HepG2 (cell line): ENCODE measurements at regions of chr6 and their contacts with region 1.

Region 1: GRCh38 chr6:104940881-104941728 is 15.8 kb upstream of the LIN28B start:
- DNase-seq: peak; percentile 43
- ATAC-seq: peak; percentile 87
- H3K4me3 ChIP-seq: peak overlapping the region; percentile 74 to 92 (median 76)
- H3K27ac ChIP-seq: peak overlapping the region; percentile 88
- H3K4me1 ChIP-seq: peaks cover 12% of the 10 kb centered on the region
- H3K27me3 ChIP-seq: no peaks in the 10 kb centered on the region
- CTCF ChIP-seq: peak; percentile 75
- EP300 ChIP-seq: no peak
- POLR2A ChIP-seq: no peak; a peak in 1 of 4 replicates
- RAD21 ChIP-seq: peak; percentile 87

Region 2: GRCh38 chr6:104789770-104790190 is 151.3 kb before region 1 on chr6:
- CTCF ChIA-PET with region 1: no interaction called
- POLR2A ChIA-PET with region 1: no interaction called
- in situ Hi-C with region 1: no loop called
- intact Hi-C with region 1: loop called (anchors 1 kb)
- DNase-seq: peak; percentile 18
- ATAC-seq: peak; percentile 71
- H3K4me3 ChIP-seq: no peak overlapping the region
- H3K27ac ChIP-seq: no peak overlapping the region
- H3K4me1 ChIP-seq: no peaks in the 10 kb centered on the region
- H3K27me3 ChIP-seq: no peaks in the 10 kb centered on the region
- CTCF ChIP-seq: peak; percentile 46
- EP300 ChIP-seq: no peak
- POLR2A ChIP-seq: no peak
- RAD21 ChIP-seq: no peak

Region 3: DNA sequence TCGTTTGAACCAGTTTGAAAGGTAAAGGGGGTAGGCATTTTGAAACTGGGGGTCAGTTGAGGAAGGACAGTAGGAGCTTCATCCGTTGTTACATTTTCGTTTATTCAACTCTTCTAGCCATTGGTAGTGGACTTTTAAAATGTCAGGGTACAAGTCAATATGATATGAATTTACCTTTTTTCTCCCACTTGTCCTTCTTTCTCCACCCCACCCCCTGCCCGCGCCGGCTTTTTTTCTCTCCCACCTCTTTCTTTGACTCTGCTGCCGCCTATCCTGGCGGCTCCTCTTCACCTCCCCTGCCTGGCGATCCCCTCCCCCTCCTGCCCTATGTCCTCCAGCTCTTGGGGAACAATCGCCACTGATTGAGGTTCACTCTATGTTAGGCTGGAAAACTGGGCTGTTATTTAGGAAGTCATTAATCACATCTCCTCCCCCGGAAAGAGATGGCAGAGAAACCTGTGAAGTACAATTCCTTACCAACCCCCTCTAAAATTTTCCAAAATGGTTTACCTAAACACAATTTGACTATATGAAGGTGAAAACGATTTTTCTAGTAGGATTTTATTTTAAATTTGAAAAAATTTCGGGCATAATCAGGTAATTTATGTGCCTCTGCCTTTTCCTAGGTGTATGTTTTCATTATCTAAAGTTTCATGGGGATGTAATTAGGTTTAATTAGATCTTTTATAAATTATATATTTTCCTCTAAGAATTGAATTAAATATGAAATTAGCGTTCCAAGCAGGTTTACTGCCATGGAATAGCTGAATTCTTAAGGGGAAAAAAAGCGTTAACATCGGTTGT is 15.0 kb after region 1 on chr6:
- CTCF ChIA-PET with region 1: interaction called, 5 read pairs
- POLR2A ChIA-PET with region 1: interaction called, 7 read pairs
- in situ Hi-C with region 1: no loop called
- intact Hi-C with region 1: loop called (anchors 2 kb)
- DNase-seq: peak; percentile 78
- ATAC-seq: peak; percentile 70
- H3K4me3 ChIP-seq: peak overlapping the region; percentile 70 to 89 (median 72)
- H3K27ac ChIP-seq: peak overlapping the region; percentile 90
- H3K4me1 ChIP-seq: peaks cover 29% of the 10 kb centered on the region
- H3K27me3 ChIP-seq: no peaks in the 10 kb centered on the region; a peak in 2 of 5 replicates
- CTCF ChIP-seq: peak; percentile 51
- EP300 ChIP-seq: peak in 1 of 2 experiments; percentile 51; a peak in 1 of 4 replicates
- POLR2A ChIP-seq: peak in 1 of 2 experiments; percentile 29; a peak in 1 of 4 replicates
- RAD21 ChIP-seq: no peak